ENCODE measurements at regions of chr4 and their contacts with region 1.

Region 1: GRCh38 chr4:183602557-183603027 is 56.4 kb downstream of the RWDD4 start:
- DNase-seq: no peak
- H3K4me3 ChIP-seq: no peak overlapping the region
- H3K27ac ChIP-seq: peak overlapping the region in 1 of 4 donors; percentile 49
- H3K4me1 ChIP-seq: peaks cover 0 to 9% (median 8%) of the 10 kb centered on the region in 3 donors
- H3K27me3 ChIP-seq: peaks cover 0 to 5% (median 0%) of the 10 kb centered on the region in 4 donors
- CTCF ChIP-seq: peak in 4 of 6 experiments; percentile 31 to 48 (median 36)
- POLR2A ChIP-seq: no peak

Region 2: DNA sequence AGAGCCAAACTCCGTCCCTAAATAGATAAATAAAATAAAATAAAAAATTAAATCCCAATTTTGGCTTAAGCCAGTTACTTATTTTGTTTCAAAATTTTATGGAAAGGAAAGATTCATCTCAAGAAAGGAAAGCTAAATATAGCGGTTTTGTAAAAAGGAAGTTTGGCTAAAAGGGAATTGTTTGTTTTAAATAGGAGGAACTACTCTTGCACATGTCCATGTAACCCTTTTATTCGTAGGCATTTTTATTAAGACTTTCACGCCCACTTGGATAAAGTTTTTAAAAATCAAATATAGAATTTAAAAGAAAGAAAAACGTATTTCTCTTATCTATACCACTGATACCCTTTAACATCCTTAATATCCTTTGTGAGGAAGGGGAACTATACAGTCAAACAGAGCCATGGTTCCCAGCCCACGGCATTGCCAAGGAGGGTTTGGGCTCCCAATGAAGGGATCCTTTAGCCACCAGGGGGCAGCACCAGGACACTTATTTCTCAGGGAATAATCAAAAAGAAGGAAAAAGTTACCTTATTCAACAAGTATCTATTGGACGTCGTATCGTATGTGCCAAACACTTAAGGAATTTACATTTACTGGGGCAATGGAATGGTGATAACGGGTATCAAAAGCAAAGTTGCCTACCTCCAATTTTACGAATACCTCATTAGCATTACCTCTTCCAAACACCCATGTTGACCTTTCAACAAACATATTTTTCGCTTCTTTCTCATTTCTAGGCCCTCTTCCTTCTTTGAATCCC is 130.5 kb before region 1 on chr4:
- intact Hi-C with region 1: loop called (anchors 10 kb)
- DNase-seq: peak; percentile 1
- H3K4me3 ChIP-seq: no peak overlapping the region
- H3K27ac ChIP-seq: no peak overlapping the region
- H3K4me1 ChIP-seq: peaks cover 0 to 7% (median 0%) of the 10 kb centered on the region in 3 donors
- H3K27me3 ChIP-seq: peaks cover 0 to 3% (median 0%) of the 10 kb centered on the region in 4 donors
- CTCF ChIP-seq: peak; percentile 83 to 86 (median 84)
- POLR2A ChIP-seq: no peak

Measured in esophagus squamous epithelium (tissue), 5 donors.